ENCODE measurements at regions of chr2 and their contacts with region 1.

Region 1: DNA sequence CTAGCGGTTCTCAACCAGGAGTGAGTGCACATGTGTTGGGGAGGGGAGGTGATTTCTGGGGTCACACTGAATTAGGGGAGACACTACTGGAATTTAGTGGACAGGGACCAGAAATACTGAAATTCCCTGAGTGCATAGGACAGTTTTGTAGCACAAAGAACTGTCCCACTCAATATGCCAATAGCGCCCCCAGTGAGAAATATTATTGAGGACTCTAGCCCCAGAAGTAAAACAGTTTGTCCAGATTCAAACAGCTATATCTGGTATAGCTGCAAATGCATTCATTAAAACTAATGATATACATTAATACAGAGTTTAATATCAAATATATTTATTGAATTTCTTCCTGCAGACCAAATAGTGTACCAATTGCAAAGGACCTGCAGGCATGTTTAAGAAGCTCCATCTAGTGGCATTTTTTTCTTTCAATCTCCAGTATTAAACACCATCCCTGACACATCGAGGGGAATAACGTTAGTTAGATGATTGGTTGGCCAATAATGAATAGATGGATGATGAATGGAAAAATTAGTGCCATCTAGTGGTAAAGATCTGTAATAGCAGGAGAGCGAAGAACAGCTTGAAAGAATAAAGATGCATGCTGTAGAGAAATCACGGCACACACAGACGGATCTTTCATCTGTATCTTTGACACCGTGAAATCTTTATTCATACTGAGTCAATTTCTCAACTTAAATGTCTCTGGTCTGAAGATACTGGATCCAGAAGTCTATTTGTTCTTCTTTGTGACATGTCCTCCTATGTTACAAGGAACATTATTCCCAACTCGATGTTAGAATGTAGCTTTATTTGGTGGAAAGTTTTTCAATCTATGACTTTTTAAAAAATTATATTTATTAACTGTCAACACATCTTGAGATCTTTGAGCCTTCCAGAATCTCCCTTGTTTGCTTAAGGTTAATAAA is 62.5 kb downstream of the DHRS9 start:
- DNase-seq: no peak
- H3K4me3 Mint-ChIP-seq: no peak overlapping the region
- H3K27ac Mint-ChIP-seq: no peak overlapping the region
- H3K4me1 Mint-ChIP-seq: no peaks in the 10 kb centered on the region
- H3K27me3 Mint-ChIP-seq: no peaks in the 10 kb centered on the region

Region 2: GRCh38 chr2:168948621-168949212 is 183.1 kb before region 1 on chr2:
- CTCF ChIA-PET with region 1: interaction called, 12 read pairs
- intact Hi-C with region 1: loop called (anchors 1 kb)
- DNase-seq: peak; percentile 7
- H3K4me3 Mint-ChIP-seq: no peak overlapping the region
- H3K27ac Mint-ChIP-seq: no peak overlapping the region
- H3K4me1 Mint-ChIP-seq: no peaks in the 10 kb centered on the region
- H3K27me3 Mint-ChIP-seq: no peaks in the 10 kb centered on the region

Region 3: GRCh38 chr2:168961450-168962229 is 170.2 kb before region 1 on chr2:
- CTCF ChIA-PET with region 1: interaction called, 42 read pairs
- intact Hi-C with region 1: loop called (anchors 1 kb)
- DNase-seq: peak; percentile 27
- H3K4me3 Mint-ChIP-seq: no peak overlapping the region
- H3K27ac Mint-ChIP-seq: no peak overlapping the region
- H3K4me1 Mint-ChIP-seq: peaks cover 14% of the 10 kb centered on the region
- H3K27me3 Mint-ChIP-seq: peaks cover 4% of the 10 kb centered on the region

Region 4: GRCh38 chr2:169069341-169069740 is 62.5 kb before region 1 on chr2 and contains the start of gene DHRS9:
- CTCF ChIA-PET with region 1: no interaction called
- intact Hi-C with region 1: loop called (anchors 2 kb)
- DNase-seq: peak; percentile 63
- H3K4me3 Mint-ChIP-seq: peak within 1 kb of the TSS; percentile 37
- H3K27ac Mint-ChIP-seq: no peak within 1 kb of the TSS
- H3K4me1 Mint-ChIP-seq: peaks cover 39% of the 10 kb centered on the region
- H3K27me3 Mint-ChIP-seq: peaks cover 2% of the 10 kb centered on the region
- total RNA-seq, gene DHRS9: 2.0 to 2.6 TPM

Region 5: GRCh38 chr2:169095621-169096105 is 36.2 kb before region 1 on chr2:
- CTCF ChIA-PET with region 1: interaction called, 10 read pairs
- intact Hi-C with region 1: no loop called
- DNase-seq: peak; percentile 35
- H3K4me3 Mint-ChIP-seq: no peak overlapping the region
- H3K27ac Mint-ChIP-seq: no peak overlapping the region
- H3K4me1 Mint-ChIP-seq: peaks cover 17% of the 10 kb centered on the region
- H3K27me3 Mint-ChIP-seq: peaks cover 7% of the 10 kb centered on the region

Region 6: DNA sequence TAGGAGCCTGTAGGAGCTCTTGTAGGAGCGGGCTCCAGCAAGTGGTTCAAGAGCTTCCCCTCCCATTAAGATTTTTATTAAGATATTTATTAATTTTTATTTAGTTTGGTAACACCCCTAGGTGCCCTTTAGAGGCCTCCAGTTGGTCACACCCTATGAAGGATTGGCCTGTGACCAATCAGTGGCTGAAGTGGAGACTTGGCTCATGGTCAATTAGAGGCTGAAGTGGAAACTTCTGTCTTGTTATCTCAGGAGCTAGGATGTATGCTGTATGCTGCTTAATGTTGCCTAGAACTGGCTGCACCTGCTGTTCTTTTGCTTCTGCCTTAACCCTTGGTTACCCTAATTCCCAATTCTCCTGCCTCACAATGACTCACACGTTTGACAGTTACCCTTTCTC is 13.8 kb before region 1 on chr2:
- CTCF ChIA-PET with region 1: interaction called, 16 read pairs
- intact Hi-C with region 1: no loop called
- DNase-seq: no peak
- H3K4me3 Mint-ChIP-seq: no peak overlapping the region
- H3K27ac Mint-ChIP-seq: no peak overlapping the region
- H3K4me1 Mint-ChIP-seq: peaks cover 3% of the 10 kb centered on the region
- H3K27me3 Mint-ChIP-seq: peaks cover 2% of the 10 kb centered on the region

Measured in activated naive CD4-positive, alpha-beta T cell treated with anti-CD3 and anti-CD28 coated beads for 36 hours (primary cell).